Sigmoid colon (tissue), 7 donors: ENCODE measurements at regions of chr4 and their contacts with region 1.

Region 1: GRCh38 chr4:56958111-56958517 is 19.3 kb downstream of the NOA1 start:
- DNase-seq: peak; percentile 96
- H3K4me3 ChIP-seq: no peak overlapping the region
- H3K27ac ChIP-seq: peak overlapping the region; percentile 10 to 56 (median 47)
- H3K4me1 ChIP-seq: peaks cover 0 to 14% (median 11%) of the 10 kb centered on the region in 4 donors
- H3K27me3 ChIP-seq: no peaks in the 10 kb centered on the region
- CTCF ChIP-seq: no peak
- EP300 ChIP-seq: no peak
- POLR2A ChIP-seq: no peak

Region 2: GRCh38 chr4:56410235-56411062 is 547.7 kb before region 1 on chr4:
- intact Hi-C with region 1: no loop called
- DNase-seq: no peak
- H3K4me3 ChIP-seq: peak overlapping the region in 3 of 4 donors; percentile 3 to 29 (median 14)
- H3K27ac ChIP-seq: peak overlapping the region; percentile 40 to 54 (median 49)
- H3K4me1 ChIP-seq: peaks cover 0 to 26% (median 21%) of the 10 kb centered on the region in 4 donors
- H3K27me3 ChIP-seq: no peaks in the 10 kb centered on the region
- CTCF ChIP-seq: no peak
- EP300 ChIP-seq: no peak
- POLR2A ChIP-seq: no peak

Region 3: DNA sequence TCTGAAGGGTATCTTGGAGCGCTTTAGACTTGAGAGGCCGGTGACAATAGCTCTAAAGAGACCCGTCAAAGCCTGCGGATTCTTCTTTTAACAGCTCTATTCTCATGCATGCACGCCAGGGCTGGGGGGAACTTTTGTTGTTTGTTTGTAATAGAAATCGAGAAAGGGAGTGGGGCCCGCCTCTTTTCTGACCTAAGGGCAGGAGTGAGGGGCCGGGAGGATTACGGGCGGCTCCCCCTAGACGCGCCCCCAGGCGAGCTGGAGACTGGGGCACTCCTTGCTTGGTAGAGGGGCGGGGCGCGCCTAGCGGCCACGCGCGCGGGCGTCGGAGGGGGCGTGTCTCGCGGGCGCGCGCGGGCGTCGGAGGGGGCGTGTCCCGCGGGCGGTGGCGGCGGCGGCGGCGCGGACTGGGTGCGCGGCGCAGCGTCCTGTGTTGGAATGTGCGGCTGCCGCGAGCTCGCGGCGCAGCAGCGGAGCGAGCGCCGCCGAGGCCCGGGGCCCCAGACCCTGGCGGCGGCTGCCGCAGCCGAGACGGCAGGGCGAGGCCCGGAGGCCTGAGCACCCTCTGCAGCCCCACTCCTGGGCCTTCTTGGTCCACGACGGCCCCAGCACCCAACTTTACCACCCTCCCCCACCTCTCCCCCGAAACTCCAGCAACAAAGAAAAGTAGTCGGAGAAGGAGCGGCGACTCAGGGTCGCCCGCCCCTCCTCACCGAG is 50.5 kb before region 1 on chr4 and contains the start of gene REST:
- intact Hi-C with region 1: loop called (anchors 5 kb)
- DNase-seq: peak; percentile 87
- H3K4me3 ChIP-seq: peak within 1 kb of the TSS; percentile 75 to 98 (median 94)
- H3K27ac ChIP-seq: peak within 1 kb of the TSS; percentile 89 to 97 (median 95)
- H3K4me1 ChIP-seq: peaks cover 0 to 30% (median 27%) of the 10 kb centered on the region in 4 donors
- H3K27me3 ChIP-seq: no peaks in the 10 kb centered on the region
- CTCF ChIP-seq: no peak
- EP300 ChIP-seq: no peak
- POLR2A ChIP-seq: no peak
- total RNA-seq, gene REST: 23.7 to 32.8 (median 26.3) TPM

Region 4: DNA sequence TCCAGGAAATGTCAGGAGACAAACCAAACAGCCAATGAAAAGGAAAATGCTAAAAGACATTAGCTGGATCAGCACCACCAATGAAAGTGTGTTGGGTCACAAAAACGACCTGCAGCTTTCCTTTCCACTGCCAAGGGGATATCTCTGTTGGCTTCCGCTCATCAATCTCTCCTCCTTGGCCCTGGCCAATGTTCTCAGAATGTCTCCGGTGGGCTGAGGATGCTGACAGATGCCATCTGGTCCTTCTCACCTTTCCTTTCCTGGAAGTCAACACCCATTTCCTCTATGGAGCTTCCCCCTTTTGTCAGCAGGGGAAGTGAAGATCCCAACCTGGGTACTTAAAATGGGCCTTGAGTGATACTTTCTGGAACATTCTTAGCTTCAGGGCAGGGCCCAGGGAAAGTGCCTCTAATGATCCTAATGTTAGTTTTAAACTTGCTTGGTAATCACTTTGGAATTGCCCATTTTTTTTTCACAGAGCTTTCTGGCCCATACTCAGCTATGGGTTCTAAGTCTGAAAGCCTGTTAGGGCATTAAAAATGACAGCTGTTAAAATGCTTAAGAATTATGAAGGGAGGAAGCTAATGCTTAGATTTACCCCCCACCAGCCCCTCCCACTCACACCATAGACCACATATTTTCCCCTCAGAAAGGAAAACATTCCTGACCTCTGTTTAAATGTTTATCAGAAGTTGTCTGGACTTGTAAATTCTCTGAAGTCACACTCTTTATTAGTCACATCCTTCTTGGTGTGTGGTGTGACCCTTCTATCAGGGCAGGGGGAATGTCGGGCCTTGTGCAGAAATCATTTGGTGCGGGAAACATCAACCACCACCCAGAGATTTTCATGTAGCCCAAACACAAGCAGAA is 122.9 kb after region 1 on chr4:
- intact Hi-C with region 1: no loop called
- DNase-seq: no peak
- H3K4me3 ChIP-seq: no peak overlapping the region
- H3K27ac ChIP-seq: peak overlapping the region; percentile 67 to 85 (median 70)
- H3K4me1 ChIP-seq: peaks cover 0 to 64% (median 59%) of the 10 kb centered on the region in 4 donors
- H3K27me3 ChIP-seq: no peaks in the 10 kb centered on the region
- CTCF ChIP-seq: no peak
- EP300 ChIP-seq: peak in 1 of 4 donors; percentile 46
- POLR2A ChIP-seq: no peak